ENCODE measurements at regions of chr2 and their contacts with region 1.

Region 1: DNA sequence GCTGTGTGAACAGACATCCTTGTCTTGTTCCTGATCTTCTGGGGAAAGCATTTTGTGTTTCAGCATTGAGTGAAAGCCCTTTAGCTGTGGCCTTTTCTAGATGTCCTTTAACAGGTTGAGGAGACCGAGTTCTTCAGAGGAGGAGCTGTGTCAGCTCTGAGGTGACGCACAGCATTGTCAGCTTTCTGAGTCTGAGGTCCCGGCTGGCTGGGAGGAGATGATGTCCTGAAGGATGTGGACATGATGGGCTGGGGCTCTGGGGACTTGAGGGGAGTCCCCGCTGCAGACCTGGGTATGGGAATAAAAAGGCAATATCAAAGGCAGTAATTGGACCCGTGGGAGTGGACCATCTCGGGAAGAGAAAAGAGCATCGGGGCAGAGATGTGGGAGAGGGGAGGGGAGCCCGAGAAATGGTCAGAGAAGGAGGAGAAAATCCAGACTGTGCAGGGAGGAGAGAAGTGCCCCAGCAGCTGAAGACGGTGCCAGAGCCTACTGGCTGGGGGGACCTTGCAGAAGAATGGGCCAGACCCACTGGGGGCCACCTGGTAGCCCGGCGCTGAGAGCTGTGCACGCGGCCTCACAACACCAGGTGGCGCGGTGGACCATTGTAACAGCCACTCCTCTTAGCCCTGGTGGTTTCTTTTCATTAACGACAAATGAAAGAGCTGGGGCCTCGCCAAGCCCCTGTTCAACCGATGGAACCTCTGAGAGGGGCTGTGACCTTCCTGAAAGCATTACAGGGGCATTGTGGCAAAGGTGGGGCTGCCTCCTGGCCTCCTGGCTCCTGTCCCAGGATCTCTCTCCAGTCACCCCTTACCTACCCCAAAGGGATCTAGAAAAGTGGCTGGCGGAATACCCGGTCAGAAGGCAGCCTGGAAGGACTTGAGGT is 61.6 kb downstream of the ST3GAL5 start:
- DNase-seq: peak; percentile 72 to 90 (median 81)
- ATAC-seq: peak; percentile 99
- H3K4me3 Mint-ChIP-seq: peak overlapping the region in 8 of 10 donors; percentile 20 to 59 (median 41)
- H3K27ac Mint-ChIP-seq: peak overlapping the region in 9 of 10 donors; percentile 69 to 90 (median 73)
- H3K4me1 Mint-ChIP-seq: peaks cover 8 to 29% (median 26%) of the 10 kb centered on the region in 4 donors
- H3K27me3 Mint-ChIP-seq: peaks cover 0 to 3% (median 0%) of the 10 kb centered on the region in 5 donors

Region 2: DNA sequence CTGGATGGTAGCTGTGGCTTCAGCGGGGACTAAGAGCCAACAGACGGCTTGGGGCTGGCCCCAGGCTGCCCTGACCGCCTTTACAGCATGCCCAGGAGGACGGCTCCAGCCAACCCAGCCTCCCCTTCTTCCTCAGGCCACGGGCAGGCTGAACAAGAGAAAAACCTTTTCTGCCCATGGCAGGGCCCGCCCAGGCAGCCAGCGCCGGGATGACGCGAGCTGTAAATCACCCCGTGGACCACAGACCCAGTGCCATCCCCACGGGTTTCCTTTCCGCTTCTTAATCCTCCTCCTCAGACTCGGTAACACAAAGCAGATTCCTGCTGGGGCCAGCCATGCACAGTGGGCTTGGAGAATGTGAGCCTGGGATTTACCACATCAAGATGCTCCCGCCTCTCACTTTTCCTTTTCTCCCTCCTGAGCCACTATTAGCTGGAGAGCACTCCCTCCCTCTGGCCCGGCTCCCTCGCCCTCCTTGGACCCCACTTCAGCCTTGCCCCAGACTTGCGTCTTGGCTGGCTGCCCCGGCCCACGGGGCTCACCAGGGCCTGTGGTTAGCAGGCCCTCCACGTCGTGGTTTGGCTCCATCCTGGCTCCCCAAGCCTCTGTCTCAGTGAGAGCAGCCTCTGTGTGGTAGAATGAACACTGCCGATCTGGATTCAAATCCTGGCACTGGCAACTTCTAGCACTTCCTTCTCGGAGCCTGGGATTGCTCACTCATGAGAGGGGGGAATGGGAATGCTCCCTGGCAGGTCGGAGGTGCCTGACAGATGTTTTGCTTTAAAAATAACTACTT is 42.0 kb before region 1 on chr2:
- POLR2A ChIA-PET with region 1: no interaction called
- DNase-seq: no peak
- ATAC-seq: peak in 1 of 2 donors; percentile 68
- H3K4me3 Mint-ChIP-seq: no peak overlapping the region
- H3K27ac Mint-ChIP-seq: peak overlapping the region in 1 of 10 donors; percentile 48
- H3K4me1 Mint-ChIP-seq: peaks cover 2 to 11% (median 6%) of the 10 kb centered on the region in 4 donors
- H3K27me3 Mint-ChIP-seq: peaks cover 0 to 13% (median 0%) of the 10 kb centered on the region in 5 donors

Region 3: GRCh38 chr2:85813982-85814801 is 13.0 kb before region 1 on chr2:
- POLR2A ChIA-PET with region 1: no interaction called
- DNase-seq: peak; percentile 58 to 86 (median 76)
- ATAC-seq: peak; percentile 87 to 92
- H3K4me3 Mint-ChIP-seq: no peak overlapping the region
- H3K27ac Mint-ChIP-seq: peak overlapping the region in 3 of 10 donors; percentile 63 to 89 (median 76)
- H3K4me1 Mint-ChIP-seq: peaks cover 0 to 8% (median 3%) of the 10 kb centered on the region in 4 donors
- H3K27me3 Mint-ChIP-seq: peaks cover 3 to 14% (median 9%) of the 10 kb centered on the region in 5 donors

Region 4: DNA sequence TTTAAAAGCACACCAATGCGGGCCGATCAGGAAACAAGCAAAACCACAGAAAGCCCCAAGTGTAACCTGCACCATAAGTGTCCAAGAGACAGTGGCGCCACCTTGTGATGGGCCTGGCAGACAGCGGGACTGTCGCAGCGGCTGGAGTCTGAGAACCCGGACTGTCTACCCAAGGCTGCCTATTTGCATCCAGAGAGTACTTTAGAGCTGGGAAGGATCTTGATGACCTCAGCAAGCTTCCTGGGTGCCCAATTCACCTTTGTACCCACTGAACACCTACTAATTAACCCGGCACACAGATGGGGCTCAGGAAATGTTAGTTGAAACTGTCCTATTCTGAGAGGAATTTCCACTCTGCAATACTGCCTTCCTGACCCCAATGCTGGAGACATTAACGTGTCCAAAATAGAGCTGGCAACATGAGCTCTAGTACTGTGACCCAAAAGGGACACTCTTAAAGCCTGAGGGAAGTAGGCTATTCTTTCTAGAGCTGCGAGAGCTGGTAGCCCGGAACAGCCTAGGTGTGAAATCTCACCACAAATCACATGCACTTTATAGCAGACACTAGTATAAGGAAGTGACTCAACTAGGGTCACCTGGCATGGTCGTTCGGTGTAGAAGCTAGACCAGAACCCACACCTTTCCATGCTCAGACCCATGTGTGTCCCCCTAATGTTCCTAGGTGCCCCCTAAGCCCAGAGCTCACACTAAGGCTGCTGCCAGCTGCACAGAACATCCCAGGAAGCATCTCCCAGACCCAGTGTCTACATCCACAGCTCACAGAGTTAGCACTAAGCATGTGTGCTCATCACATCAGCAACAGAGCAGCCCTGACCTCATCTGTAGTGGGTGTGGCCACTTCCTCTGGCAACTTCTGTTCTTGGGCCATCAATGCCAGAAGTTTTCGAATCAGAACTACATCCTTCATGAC is 253.0 kb after region 1 on chr2:
- POLR2A ChIA-PET with region 1: interaction called, 13 read pairs
- DNase-seq: peak; percentile 68 to 91 (median 80)
- ATAC-seq: peak; percentile 89 to 91
- H3K4me3 Mint-ChIP-seq: peak overlapping the region in 2 of 10 donors; percentile 48 to 55
- H3K27ac Mint-ChIP-seq: peak overlapping the region; percentile 61 to 95 (median 82)
- H3K4me1 Mint-ChIP-seq: peaks cover 5 to 27% (median 22%) of the 10 kb centered on the region in 4 donors
- H3K27me3 Mint-ChIP-seq: no peaks in the 10 kb centered on the region

Measured in naive thymus-derived CD8-positive, alpha-beta T cell (primary cell).